ENCODE measurements at regions of chr16 and their contacts with region 1.

Region 1: DNA sequence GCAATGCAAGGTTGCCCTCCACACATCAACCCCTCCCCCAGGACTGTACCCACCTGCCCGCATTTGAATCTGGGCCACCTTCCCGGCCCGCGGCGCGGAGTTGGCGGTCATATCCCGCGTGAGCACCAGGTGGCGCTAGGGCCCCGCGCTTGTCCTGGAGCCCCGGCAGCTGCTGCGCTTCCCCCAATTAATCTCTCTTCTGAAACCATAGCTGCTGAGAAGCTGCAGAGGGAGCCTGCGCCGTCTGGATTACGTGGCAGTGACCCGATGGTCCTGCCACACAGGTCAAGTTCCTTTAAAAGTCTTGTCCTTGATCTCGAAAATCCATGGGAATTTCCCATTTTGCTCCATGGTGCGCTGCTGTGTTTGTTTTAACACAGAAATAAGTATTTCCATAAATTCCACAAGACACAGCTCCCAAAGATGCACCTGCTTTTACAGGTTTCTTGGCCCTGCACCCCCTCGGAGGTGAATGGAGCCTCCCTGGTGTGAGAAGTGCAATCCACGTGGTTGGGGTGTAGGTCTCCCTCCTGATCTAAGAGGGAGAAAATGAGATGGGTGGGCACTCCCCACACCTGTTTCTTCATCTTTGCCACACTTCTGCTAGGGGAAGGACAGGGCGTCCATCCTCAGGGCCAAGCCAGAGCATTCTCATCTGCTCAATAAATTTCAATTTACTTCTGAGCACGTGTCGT is 22.1 kb downstream of the COX4I1 start:
- DNase-seq: peak; percentile 76 to 92
- ATAC-seq: peak; percentile 87 to 92
- H3K4me3 ChIP-seq: no peak overlapping the region
- H3K27ac ChIP-seq: no peak overlapping the region
- H3K4me1 ChIP-seq: no peaks in the 10 kb centered on the region
- CTCF ChIP-seq: peak; percentile 94
- EP300 ChIP-seq: no peak
- POLR2A ChIP-seq: no peak
- RAD21 ChIP-seq: peak; percentile 98 to 99

Region 2: DNA sequence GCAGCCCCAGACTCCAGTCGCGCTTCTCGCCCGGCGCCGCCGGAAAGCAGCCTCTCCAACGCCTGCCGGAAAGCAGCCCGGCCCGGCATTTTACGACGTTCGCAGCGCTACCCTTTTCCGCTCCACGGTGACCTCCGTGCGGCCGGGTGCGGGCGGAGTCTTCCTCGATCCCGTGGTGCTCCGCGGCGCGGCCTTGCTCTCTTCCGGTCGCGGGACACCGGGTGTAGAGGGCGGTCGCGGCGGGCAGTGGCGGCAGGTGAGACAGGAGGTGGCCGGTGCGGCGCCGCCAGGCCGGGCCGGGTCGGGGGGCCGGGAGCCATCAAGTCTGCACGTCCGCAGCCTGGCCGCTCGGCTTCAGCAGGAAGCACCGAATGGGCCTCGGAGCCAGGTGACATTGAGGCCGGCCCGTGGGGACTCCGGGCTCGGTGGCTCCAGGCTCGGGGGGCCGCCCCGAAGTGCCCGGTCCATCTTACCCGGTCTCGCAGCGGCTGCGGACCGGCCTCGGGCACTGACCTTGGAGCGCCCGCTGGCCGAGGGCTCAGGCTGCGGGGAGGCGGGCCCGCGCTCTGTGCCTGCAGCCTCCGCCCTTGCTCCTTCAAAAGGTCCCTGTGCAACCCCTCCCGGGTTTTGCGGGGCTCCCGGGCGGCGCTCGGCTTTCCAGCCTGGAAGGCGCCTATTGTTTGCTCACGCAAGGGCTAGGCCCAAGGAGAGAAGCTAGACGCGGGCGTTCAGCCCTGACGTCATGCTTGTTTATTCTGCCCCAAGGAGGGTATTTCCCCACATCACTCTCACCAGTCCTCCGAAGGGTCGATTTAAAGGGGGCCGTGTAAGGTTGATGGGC is 21.9 kb before region 1 on chr16 and contains the starts of genes COX4I1 and EMC8:
- CTCF ChIA-PET with region 1: interaction called, 19 read pairs
- POLR2A ChIA-PET with region 1: no interaction called
- DNase-seq: peak; percentile 89 to 95
- ATAC-seq: peak; percentile 89 to 93
- H3K4me3 ChIP-seq: peak within 1 kb of the TSS; percentile 100
- H3K27ac ChIP-seq: peak within 1 kb of the TSS; percentile 98
- H3K4me1 ChIP-seq: peaks cover 19% of the 10 kb centered on the region
- CTCF ChIP-seq: no peak
- EP300 ChIP-seq: no peak
- POLR2A ChIP-seq: peak; percentile 81
- RAD21 ChIP-seq: no peak
- polyA plus RNA-seq, gene COX4I1: 854 and 929 TPM in 2 replicates
- polyA plus RNA-seq, gene EMC8: 43.0 and 47.3 TPM in 2 replicates

Region 3: GRCh38 chr16:85898521-85899442 is 77.2 kb after region 1 on chr16 and contains the start of gene IRF8:
- CTCF ChIA-PET with region 1: interaction called, 47 read pairs
- POLR2A ChIA-PET with region 1: no interaction called
- DNase-seq: peak in 1 of 2 experiments; percentile 34
- ATAC-seq: peak; percentile 70 to 84; a peak in 5 of 6 replicates
- H3K4me3 ChIP-seq: peak within 1 kb of the TSS; percentile 41
- H3K27ac ChIP-seq: peak within 1 kb of the TSS; percentile 34 to 75; a peak in 3 of 6 replicates
- H3K4me1 ChIP-seq: no peaks in the 10 kb centered on the region
- CTCF ChIP-seq: no peak
- EP300 ChIP-seq: no peak
- POLR2A ChIP-seq: no peak
- RAD21 ChIP-seq: no peak
- polyA plus RNA-seq, gene IRF8: 0.16 and 0.22 TPM in 2 replicates

Region 4: DNA sequence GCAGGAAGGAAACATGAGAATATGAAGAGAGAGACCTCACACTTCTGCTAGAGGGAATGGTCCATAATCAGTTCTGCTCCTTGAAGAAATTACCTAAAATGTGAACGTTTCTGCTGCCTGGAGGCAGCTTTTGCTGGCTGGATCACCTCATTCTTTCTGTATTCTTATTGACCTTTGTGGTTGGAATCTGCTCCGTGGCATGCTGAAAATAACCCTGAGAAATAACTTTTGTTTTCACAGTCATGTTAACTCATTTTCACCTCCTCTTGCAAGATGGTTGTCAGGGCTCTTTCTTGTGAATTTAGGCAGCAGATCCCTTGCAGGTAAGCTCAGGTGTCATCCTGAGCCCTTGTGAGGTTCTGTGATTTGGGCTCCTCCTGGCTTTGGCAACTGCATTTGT is 147.6 kb after region 1 on chr16:
- CTCF ChIA-PET with region 1: interaction called, 13 read pairs
- POLR2A ChIA-PET with region 1: no interaction called
- DNase-seq: no peak
- ATAC-seq: no peak
- H3K4me3 ChIP-seq: no peak overlapping the region
- H3K27ac ChIP-seq: no peak overlapping the region
- H3K4me1 ChIP-seq: peaks cover 8% of the 10 kb centered on the region; the same call in 1 of the 3 replicates
- CTCF ChIP-seq: no peak
- EP300 ChIP-seq: no peak
- POLR2A ChIP-seq: no peak
- RAD21 ChIP-seq: no peak

Region 5: GRCh38 chr16:86016201-86016871 is 194.7 kb after region 1 on chr16:
- CTCF ChIA-PET with region 1: interaction called, 405 read pairs
- POLR2A ChIA-PET with region 1: interaction called, 5 read pairs
- DNase-seq: peak; percentile 64 to 79
- ATAC-seq: peak; percentile 74 to 89
- H3K4me3 ChIP-seq: no peak overlapping the region
- H3K27ac ChIP-seq: no peak overlapping the region
- H3K4me1 ChIP-seq: no peaks in the 10 kb centered on the region
- CTCF ChIP-seq: peak; percentile 90
- EP300 ChIP-seq: no peak
- POLR2A ChIP-seq: no peak
- RAD21 ChIP-seq: peak; percentile 93 to 94

Region 6: DNA sequence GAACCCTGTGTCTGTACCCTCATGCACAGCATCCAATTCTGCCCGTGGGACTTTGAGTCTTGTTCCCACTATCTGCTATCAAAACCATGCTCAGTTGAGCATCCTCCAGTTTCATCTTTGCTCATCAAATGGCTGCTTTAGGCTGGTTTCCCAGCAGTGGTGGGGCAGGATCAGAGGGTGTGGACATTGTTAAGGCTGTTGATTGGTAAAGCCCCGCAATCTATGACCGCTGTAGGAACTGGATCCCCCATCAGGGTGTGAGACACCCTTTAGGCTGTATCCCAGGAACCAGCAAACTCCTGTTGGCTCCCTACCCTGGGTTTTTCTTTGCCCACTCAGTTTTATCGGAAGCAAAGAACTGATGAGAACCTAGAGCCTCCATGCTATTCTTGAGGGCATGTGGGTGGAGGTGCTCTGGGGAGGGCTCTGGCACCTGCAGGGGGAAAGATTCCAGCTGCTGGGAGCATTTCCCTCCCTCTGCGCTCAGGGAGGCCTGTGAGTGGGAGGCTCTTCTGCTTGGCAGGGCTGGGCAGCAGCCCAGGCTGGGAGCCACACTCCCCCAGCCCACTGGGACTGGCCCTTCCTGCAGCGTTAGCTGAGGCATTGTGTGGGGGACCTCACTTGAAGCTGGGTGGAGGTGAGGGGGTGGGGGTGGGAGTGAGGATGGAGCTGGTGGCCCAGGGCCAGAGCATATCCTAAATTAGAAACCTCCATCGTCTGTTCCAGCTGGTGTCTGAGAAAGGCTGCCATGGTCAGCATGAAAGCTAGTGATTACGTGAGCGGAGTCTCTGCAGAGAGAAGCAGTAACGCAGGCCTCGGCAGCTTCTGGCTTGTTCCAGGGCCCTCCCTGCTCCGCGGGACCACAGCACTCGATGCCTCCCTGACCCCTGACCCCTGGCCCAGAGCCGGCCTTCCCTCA is 237.9 kb after region 1 on chr16:
- CTCF ChIA-PET with region 1: interaction called, 10 read pairs
- POLR2A ChIA-PET with region 1: no interaction called
- DNase-seq: no peak
- ATAC-seq: no peak
- H3K4me3 ChIP-seq: no peak overlapping the region
- H3K27ac ChIP-seq: no peak overlapping the region
- H3K4me1 ChIP-seq: no peaks in the 10 kb centered on the region
- CTCF ChIP-seq: no peak
- EP300 ChIP-seq: no peak
- POLR2A ChIP-seq: no peak
- RAD21 ChIP-seq: no peak